A549 (cell line): ENCODE measurements at regions of chr19 and their contacts with region 1.

Region 1: DNA sequence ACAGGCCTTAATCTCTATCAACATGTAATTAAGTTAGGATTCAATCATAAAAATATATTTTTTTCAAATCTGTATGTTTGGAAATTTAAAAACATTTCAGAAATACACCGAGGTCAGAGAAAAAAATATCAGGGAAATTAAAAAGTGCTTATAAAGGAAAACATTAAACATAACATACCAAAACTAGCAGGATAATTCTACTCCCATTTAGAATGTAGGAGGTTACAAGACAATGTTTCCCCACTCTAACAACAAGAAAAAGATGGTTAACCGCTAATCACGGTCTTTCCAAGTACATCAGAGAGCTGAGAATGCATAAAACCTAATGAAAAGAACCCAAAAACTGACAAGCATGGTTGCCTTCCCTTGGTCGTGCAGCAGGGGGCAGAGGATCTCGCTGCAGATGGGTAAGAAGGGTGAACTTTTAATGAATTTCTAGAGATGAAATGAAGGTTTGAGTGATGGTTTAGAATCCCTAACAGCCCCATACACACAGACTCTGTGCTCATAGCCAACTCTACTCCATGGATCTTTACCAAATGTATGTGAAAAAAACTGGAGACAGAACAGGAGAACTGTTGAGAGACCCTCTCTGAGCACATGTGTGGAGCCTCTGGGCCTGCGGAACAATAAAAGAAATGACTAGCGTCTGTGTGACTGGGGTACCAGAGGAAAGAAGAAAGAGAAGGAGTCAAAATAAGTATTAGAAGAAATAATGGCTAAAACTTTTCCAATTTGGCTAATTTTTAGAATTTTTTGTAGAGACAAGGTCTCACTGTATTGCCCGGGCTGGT is 51.3 kb upstream of the LSM14A start:
- DNase-seq: peak; percentile 77 to 87
- ATAC-seq: peak; percentile 70 to 83; a peak in 5 of 6 replicates
- H3K4me3 ChIP-seq: no peak overlapping the region
- H3K27ac ChIP-seq: no peak overlapping the region
- H3K4me1 ChIP-seq: no peaks in the 10 kb centered on the region
- CTCF ChIP-seq: peak; percentile 85
- EP300 ChIP-seq: no peak
- POLR2A ChIP-seq: no peak
- RAD21 ChIP-seq: peak; percentile 66 to 84

Region 2: DNA sequence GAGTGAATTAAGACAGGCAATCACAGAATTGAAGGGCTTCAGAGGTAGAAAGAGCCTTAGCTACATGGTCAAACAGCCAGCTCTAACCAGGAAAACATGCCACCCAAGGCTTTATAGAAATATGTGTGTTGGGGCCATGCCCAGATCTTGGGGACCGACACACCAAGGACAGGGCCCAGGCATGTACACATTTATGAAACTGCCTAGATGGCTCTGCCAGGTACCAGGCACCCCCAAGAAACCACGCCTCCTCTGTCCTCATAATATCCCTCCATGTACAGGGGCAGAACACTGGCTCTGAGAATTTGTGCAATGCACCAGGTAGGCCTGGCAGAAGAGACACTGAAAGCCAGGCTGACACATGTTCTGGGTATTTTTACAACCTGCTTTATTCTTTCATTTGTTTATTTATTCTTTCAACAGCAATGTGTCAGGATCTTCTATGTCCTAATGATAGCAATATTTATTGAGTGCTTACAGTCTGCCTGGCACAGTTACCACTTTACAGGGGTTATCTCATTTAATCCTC is 86.7 kb before region 1 on chr19:
- CTCF ChIA-PET with region 1: no interaction called
- POLR2A ChIA-PET with region 1: no interaction called
- DNase-seq: no peak
- ATAC-seq: peak; percentile 22 to 23; a peak in 2 of 6 replicates
- H3K4me3 ChIP-seq: no peak overlapping the region
- H3K27ac ChIP-seq: no peak overlapping the region
- H3K4me1 ChIP-seq: peaks cover 3% of the 10 kb centered on the region; the same call in 1 of the 3 replicates
- CTCF ChIP-seq: no peak
- EP300 ChIP-seq: no peak
- POLR2A ChIP-seq: no peak
- RAD21 ChIP-seq: no peak

Region 3: DNA sequence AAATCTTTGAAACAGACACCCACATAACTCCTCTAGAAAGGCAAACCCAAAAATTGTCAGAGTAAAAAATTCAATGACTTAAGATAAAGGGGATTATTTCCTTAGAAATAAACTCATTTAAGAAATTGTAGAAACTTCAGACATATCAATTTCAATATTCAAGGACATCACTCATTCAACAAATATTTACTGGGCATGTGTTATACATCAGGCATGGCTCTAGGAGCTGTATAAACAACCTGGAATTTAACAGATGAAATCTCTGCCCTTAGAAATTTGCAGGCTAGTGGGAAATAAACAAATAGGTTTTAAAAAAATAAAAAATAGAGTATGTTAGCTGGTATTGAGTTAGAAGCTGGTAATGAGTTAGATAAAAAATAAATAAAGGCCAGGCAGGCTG is 32.7 kb before region 1 on chr19:
- CTCF ChIA-PET with region 1: interaction called, 18 read pairs
- POLR2A ChIA-PET with region 1: no interaction called
- DNase-seq: no peak
- ATAC-seq: no peak
- H3K4me3 ChIP-seq: no peak overlapping the region
- H3K27ac ChIP-seq: no peak overlapping the region
- H3K4me1 ChIP-seq: no peaks in the 10 kb centered on the region
- CTCF ChIP-seq: no peak
- EP300 ChIP-seq: no peak
- POLR2A ChIP-seq: no peak
- RAD21 ChIP-seq: no peak

Region 4: GRCh38 chr19:34104096-34104495 is 16.9 kb before region 1 on chr19:
- CTCF ChIA-PET with region 1: interaction called, 113 read pairs
- POLR2A ChIA-PET with region 1: no interaction called
- DNase-seq: no peak
- ATAC-seq: no peak
- H3K4me3 ChIP-seq: no peak overlapping the region
- H3K27ac ChIP-seq: no peak overlapping the region
- H3K4me1 ChIP-seq: no peaks in the 10 kb centered on the region
- CTCF ChIP-seq: no peak
- EP300 ChIP-seq: no peak
- POLR2A ChIP-seq: no peak
- RAD21 ChIP-seq: no peak

Region 5: DNA sequence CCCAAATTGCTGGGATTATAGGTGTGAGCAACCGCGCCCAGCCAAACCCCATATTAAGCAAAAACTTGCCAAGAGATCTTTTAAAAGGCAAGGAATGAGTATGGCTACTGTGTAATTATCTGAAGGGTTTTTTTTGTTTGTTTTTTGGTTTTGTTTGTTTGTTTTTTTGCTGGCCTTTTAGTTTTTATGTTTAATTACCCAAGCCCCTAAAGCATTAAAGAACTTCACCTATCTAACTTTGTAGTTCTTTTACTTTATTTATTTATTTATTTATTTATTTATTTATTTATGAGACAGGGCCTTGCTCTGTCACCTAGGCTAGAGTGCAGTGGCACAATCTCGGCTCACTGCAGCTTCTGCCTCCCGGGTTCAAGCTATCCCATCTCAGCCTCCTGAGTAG is 93.0 kb after region 1 on chr19:
- CTCF ChIA-PET with region 1: no interaction called
- POLR2A ChIA-PET with region 1: no interaction called
- DNase-seq: no peak
- ATAC-seq: no peak
- H3K4me3 ChIP-seq: no peak overlapping the region
- H3K27ac ChIP-seq: no peak overlapping the region
- H3K4me1 ChIP-seq: peaks cover 13% of the 10 kb centered on the region; the same call in 2 of the 3 replicates
- CTCF ChIP-seq: no peak
- EP300 ChIP-seq: no peak
- POLR2A ChIP-seq: no peak
- RAD21 ChIP-seq: no peak